ENCODE measurements at regions of chr6 and their contacts with region 1.

Region 1: DNA sequence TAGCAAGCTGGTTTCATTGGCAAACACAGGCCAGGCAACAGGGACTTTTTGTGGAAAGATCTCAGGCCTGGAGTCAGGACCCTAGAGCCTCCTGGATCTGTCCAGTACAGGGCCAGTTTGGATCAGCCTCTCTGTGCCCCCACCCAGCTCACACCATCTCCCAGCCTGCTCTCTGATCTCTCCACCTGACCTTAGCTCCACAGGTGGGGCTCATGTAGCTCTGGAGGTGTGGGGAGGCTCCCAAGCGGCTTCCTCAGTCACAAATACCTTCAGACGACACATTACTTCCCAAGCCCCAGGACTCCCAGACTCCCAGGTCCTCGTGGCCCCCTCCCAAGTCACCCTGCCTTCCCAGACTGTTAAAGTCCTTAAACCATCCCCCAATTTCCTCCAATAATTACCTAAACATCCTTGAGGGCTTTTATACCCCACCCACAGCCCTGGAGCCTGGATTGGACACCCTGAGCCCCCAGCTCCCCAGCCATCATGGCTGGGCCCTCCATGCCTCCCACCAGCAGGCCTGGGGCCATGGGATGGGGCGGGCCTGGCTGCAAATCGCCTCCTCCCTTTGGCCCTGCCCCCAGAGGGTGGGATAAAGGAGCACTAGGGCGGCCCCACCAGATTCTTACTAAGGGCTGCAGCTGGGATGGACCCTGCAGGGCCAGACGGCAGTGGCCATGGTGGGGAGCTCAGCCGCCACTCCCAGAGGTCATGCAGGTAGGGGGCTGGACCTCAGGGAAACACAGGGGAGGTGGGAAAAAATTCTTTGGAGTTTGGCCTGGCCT is 15.9 kb upstream of the FANCE start:
- DNase-seq: no peak

Region 2: GRCh38 chr6:35089935-35090505 is 346.2 kb before region 1 on chr6:
- intact Hi-C with region 1: no loop called
- DNase-seq: peak; percentile 65

Region 3: GRCh38 chr6:35297601-35298481 is 138.4 kb before region 1 on chr6 and contains the start of gene DEF6:
- intact Hi-C with region 1: loop called in 1 of 2 experiments (anchors 1 kb)
- DNase-seq: peak; percentile 94
- total RNA-seq, gene DEF6: 5.5 to 6.0 TPM